ENCODE measurements at regions of chr9 and their contacts with region 1.

Region 1: DNA sequence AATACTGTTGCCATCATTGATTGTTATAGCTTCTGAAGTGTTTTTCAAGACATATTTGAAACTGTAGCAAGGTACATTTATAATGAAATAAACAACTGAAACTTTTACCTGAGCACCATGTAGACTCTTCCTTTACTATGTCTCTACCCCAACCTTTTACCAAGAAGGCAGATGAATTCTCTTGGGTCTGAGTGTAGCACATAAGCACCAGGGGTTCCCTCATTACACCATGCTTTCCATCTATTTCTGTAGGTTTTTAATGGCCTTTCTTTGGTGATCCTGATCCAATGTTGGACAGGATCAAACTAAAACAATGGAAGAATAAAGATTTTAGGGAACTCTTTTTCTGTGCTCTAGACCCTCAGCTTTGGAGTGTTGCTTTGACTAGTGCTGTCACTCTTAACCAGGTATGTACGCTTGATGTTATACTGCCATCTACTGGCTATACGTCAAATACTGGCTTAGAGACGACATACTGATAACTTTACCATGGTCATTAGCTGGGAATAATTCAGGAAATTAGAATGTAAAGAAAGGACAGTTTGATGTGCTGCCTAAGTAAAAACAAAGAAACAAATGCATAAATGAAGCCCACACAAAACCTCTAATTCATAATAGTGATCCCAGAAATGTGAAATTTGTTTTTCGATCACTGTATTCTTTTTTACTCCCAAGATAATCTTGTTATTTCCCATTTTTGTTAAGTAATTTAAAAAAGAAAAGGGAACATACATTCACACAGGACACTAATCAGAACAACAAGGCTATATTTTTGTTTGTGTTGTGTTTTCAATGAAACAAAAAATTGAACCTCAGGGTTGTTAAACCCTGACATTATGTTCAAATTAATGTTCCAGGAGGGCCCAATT is 30.7 kb downstream of the IFNW1 start:
- DNase-seq: peak; percentile 43 to 67 (median 64)
- H3K4me3 ChIP-seq: no peak overlapping the region
- H3K4me3 Mint-ChIP-seq: no peak overlapping the region
- H3K27ac ChIP-seq: no peak overlapping the region
- H3K27ac Mint-ChIP-seq: no peak overlapping the region
- H3K4me1 ChIP-seq: no peaks in the 10 kb centered on the region
- H3K4me1 Mint-ChIP-seq: no peaks in the 10 kb centered on the region
- H3K27me3 ChIP-seq: no peaks in the 10 kb centered on the region
- H3K27me3 Mint-ChIP-seq: peaks cover 2 to 3% of the 10 kb centered on the region in 2 donors

Region 2: DNA sequence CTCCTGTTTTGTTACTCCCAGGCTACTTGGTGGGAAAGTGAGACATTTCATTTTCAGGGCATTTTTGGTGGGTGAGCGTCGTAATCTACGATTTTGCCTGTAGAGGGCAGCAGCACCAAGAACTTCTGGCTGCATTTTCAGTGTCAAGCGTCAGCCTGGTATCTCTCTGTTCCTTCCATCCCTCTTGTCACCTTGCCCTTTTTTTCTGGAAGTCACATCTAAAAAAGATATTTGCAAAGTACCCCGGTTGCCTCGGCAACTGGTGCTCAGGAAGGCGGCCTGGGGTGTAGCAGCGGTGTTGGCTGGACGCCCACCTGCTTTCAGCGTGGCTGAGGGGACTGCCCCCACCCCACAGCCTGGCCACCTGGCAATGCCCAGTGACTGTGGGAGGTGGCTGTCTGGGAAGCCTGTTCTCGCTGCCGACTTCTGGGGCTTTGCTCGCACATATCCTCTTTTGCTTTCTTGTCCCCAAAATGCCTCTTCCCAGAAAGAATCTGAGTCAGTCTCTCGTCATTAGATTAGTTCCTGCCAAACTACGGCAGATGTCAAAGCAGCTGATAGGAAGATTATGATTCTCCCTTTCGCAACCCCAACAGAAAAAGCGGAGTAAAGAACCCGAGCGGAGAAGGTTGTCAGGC is 1617.6 kb before region 1 on chr9:
- CTCF ChIA-PET with region 1: no interaction called
- POLR2A ChIA-PET with region 1: no interaction called
- intact Hi-C with region 1: loop called (anchors 1 kb)
- DNase-seq: peak in 4 of 5 donors; percentile 17 to 32 (median 28)
- H3K4me3 ChIP-seq: no peak overlapping the region
- H3K4me3 Mint-ChIP-seq: peak overlapping the region; percentile 8 to 73 (median 36)
- H3K27ac ChIP-seq: no peak overlapping the region
- H3K27ac Mint-ChIP-seq: peak overlapping the region in 1 of 7 donors; percentile 66
- H3K4me1 ChIP-seq: peaks cover 7% of the 10 kb centered on the region
- H3K4me1 Mint-ChIP-seq: peaks cover 6 to 14% (median 12%) of the 10 kb centered on the region in 4 donors
- H3K27me3 ChIP-seq: no peaks in the 10 kb centered on the region
- H3K27me3 Mint-ChIP-seq: peaks cover 4 to 12% of the 10 kb centered on the region in 2 donors

Region 3: DNA sequence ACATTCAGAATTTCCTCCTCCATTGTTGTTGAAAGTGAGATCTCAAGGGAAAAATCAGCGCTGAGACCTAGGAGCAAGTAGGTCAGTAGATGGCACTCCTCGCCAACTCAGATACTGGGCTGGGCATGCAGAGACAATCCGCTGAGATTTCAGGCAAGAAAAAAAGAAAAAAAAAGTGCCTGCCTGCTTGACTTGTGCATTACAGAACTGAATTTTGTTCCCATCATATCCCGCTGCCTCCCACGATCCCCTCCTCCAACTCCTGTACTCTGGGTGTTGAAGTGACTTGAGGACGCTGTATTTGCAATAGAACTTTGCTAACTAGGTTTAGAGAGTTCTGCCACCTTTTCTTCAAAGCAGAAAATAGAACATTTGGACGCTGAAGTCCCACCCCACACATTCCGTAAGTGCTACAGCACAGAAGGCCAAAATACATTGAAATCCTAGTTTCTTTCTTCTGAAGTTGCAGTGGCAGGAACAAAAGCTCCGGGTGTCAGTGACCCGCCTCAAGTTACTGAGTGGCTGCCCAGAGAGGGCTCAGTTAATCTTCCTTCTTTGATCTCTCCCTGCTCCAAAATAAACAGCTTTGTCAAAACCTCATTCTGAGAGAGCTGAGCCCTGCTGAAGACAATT is 754.4 kb before region 1 on chr9:
- CTCF ChIA-PET with region 1: interaction called, 3 read pairs
- POLR2A ChIA-PET with region 1: no interaction called
- intact Hi-C with region 1: loop called (anchors 2 kb)
- DNase-seq: peak; percentile 34 to 51 (median 42)
- H3K4me3 ChIP-seq: no peak overlapping the region
- H3K4me3 Mint-ChIP-seq: no peak overlapping the region
- H3K27ac ChIP-seq: no peak overlapping the region
- H3K27ac Mint-ChIP-seq: peak overlapping the region in 5 of 7 donors; percentile 5 to 82 (median 68)
- H3K4me1 ChIP-seq: peaks cover 9% of the 10 kb centered on the region
- H3K4me1 Mint-ChIP-seq: peaks cover 13 to 55% (median 24%) of the 10 kb centered on the region in 4 donors
- H3K27me3 ChIP-seq: no peaks in the 10 kb centered on the region
- H3K27me3 Mint-ChIP-seq: no peaks in the 10 kb centered on the region

Region 4: DNA sequence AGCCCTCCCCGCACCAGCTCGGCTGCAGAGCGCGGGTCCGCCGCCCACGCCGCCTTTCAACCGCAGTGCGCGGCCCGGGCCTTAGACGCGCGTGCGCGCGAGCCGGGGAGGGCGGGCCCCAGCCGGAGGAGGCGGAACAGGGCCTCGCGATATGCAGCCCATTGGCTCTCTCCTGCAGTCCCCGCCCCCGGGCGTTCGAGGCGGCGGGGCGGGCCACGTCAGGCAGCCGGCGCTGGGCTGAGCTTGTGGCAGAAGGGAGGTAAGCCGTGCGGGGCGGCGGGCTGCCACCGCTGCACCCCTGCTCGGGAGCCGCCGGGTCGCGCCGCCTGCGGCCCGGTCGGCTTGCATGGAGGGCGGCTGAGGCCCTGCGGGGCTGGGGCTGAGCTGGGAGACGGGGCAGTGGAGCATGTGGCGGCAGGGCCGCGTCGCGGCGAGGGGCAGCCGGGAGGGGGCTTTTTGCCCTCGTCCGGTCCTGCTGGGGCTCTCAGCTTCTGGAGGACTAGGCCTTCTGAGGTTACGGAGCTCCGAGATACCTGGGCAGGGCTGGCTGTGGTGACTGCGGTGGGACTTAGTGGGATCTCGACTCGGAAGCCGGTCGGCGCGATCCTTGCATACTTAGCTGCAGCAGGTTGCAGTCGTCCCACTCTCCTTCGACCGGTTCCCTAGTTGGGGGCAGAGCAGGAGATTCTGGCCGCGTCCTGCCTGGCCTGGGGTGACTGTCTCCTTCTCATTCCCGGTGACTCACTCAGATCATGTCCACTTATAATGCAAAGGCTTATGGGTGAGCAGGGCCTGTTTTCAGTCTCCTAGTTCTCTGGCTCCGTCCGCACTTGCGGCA is 426.7 kb before region 1 on chr9 and contains the start of gene FOCAD:
- CTCF ChIA-PET with region 1: no interaction called
- POLR2A ChIA-PET with region 1: no interaction called
- intact Hi-C with region 1: loop called (anchors 10 kb)
- DNase-seq: peak; percentile 94 to 96 (median 96)
- H3K4me3 ChIP-seq: peak within 1 kb of the TSS; percentile 86 to 96
- H3K4me3 Mint-ChIP-seq: peak within 1 kb of the TSS; percentile 90 to 96 (median 94)
- H3K27ac ChIP-seq: peak within 1 kb of the TSS; percentile 80
- H3K27ac Mint-ChIP-seq: peak within 1 kb of the TSS; percentile 83 to 95 (median 90)
- H3K4me1 ChIP-seq: peaks cover 22% of the 10 kb centered on the region
- H3K4me1 Mint-ChIP-seq: peaks cover 11 to 20% (median 16%) of the 10 kb centered on the region in 4 donors
- H3K27me3 ChIP-seq: no peaks in the 10 kb centered on the region
- H3K27me3 Mint-ChIP-seq: no peaks in the 10 kb centered on the region
- total RNA-seq, gene FOCAD: 18.8 to 20.6 TPM

Region 5: DNA sequence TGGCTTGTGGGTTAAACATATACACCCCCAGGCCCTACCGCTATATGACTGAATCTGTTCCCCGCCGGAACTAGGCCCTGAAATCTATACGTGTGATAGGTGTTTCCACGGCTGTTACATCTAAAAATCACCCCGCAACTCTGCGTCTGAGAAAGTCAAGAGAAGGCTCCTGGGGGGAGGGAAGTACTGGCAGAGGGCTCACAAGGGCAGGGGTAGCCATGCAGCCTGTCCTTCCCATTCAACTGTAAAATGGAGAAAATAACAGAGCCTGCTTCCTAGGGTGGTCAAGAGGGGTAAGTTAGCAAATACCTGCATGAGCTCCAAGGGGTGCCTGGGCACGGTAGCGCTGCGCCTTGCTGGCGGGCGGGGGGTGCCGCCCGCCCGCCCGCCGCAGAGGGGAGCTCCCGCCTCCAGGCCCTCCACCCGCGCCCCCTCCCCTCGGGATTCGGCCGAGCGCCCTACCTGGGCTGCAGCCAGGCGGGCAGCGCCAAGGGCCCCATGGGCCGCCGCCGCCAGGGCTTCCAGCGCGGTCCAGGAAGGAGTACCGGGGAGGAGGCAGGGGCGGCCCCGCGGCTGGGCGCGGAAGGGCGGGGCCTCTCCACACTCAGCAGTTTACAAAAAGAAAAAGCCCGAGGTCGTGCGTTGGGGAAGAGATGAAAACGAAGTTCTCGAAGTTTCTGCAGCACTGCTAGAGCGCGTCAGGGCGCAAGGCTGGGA is 79.7 kb before region 1 on chr9 and contains the start of gene HACD4:
- CTCF ChIA-PET with region 1: interaction called, 4 read pairs
- POLR2A ChIA-PET with region 1: no interaction called
- intact Hi-C with region 1: loop called (anchors 2 kb)
- DNase-seq: peak; percentile 69 to 77 (median 74)
- H3K4me3 ChIP-seq: peak within 1 kb of the TSS; percentile 74 to 85
- H3K4me3 Mint-ChIP-seq: peak within 1 kb of the TSS in 6 of 8 donors; percentile 79 to 85 (median 81)
- H3K27ac ChIP-seq: peak within 1 kb of the TSS; percentile 64
- H3K27ac Mint-ChIP-seq: peak within 1 kb of the TSS in 6 of 7 donors; percentile 76 to 93 (median 86)
- H3K4me1 ChIP-seq: peaks cover 44% of the 10 kb centered on the region
- H3K4me1 Mint-ChIP-seq: peaks cover 21 to 33% (median 27%) of the 10 kb centered on the region in 4 donors
- H3K27me3 ChIP-seq: no peaks in the 10 kb centered on the region
- H3K27me3 Mint-ChIP-seq: no peaks in the 10 kb centered on the region
- total RNA-seq, gene HACD4: 16.0 to 18.3 TPM

Region 6: DNA sequence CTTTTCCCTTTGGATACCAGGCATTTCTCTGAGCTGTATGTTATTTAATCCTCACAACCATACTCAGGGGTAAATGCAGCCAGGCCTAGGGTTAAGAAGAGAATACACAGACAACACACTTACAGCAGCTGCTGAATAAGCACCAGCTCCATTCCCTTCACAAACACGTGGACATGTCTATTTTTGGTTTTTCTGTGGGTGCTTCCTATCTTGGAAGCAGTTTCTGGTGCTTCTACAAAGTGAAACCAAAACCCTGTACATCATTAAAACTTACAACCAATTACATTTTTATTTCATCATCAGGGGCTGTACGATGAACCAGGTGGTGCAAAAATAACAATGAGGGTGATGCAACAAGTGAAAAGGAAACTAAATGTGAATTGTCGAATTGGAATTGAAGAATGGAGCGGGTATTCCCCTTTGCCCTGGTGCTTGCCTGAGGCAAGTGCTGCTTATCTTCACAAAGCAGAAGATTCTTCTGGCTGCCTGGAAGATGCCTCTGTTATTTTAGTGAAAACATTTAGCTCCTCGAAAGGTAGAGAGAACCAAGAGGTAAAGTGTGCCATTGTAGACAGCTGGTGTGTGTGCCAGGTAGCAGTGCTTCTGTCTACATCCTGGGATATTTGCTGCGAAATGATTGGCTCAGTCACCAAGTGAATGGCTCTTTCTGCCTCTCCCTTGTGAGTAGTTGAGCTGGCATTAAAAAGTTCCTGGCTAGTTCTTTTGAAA is 14.6 kb before region 1 on chr9:
- CTCF ChIA-PET with region 1: interaction called, 14 read pairs
- POLR2A ChIA-PET with region 1: interaction called, 3 read pairs
- intact Hi-C with region 1: no loop called
- DNase-seq: peak; percentile 65 to 81 (median 73)
- H3K4me3 ChIP-seq: peak overlapping the region; percentile 7 to 57
- H3K4me3 Mint-ChIP-seq: peak overlapping the region; percentile 56 to 83 (median 74)
- H3K27ac ChIP-seq: peak overlapping the region; percentile 50
- H3K27ac Mint-ChIP-seq: peak overlapping the region; percentile 83 to 92 (median 90)
- H3K4me1 ChIP-seq: peaks cover 27% of the 10 kb centered on the region
- H3K4me1 Mint-ChIP-seq: peaks cover 28 to 52% (median 36%) of the 10 kb centered on the region in 4 donors
- H3K27me3 ChIP-seq: no peaks in the 10 kb centered on the region
- H3K27me3 Mint-ChIP-seq: no peaks in the 10 kb centered on the region